ENCODE measurements at regions of chr11 and their contacts with region 1.

Region 1: DNA sequence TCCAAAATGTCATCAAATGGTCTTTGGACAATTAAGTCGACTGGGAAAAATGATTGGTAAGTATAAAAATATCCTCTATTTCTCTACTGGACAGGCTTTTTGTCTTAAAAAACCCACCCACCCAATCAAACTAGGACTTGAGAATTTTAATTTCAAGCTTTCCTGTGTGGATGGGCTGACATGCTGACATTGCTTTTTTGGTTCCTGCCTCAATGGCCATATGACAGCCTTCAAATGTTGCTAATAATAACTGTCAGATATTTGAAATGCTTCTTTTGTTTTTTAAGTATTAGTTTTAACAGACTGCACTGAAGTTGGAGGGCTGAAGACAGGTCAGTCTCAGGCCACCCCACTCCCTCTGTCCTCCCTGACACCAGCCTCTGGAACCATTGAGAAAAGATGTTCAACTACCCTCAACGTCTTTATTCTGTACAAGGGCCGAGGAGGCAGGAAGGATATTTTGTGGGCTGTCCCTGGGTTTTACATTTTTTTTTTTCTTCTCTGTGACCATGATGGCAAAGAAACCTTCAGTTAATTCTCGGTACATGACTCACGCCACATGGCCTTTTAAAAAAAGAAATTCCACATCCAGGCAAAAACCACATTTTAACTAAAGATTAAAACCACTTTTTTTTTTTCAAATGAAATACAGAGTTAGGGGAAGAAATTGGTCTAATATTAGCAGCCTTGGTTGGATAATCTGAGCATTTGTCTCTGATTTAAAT is 130.4 kb downstream of the SLC1A2 start:
- DNase-seq: no peak
- H3K4me3 ChIP-seq: no peak overlapping the region
- H3K27ac ChIP-seq: peak overlapping the region; percentile 40 to 68
- H3K4me1 ChIP-seq: peaks cover 0 to 11% of the 10 kb centered on the region in 2 donors
- H3K27me3 ChIP-seq: no peaks in the 10 kb centered on the region
- CTCF ChIP-seq: no peak

Region 2: DNA sequence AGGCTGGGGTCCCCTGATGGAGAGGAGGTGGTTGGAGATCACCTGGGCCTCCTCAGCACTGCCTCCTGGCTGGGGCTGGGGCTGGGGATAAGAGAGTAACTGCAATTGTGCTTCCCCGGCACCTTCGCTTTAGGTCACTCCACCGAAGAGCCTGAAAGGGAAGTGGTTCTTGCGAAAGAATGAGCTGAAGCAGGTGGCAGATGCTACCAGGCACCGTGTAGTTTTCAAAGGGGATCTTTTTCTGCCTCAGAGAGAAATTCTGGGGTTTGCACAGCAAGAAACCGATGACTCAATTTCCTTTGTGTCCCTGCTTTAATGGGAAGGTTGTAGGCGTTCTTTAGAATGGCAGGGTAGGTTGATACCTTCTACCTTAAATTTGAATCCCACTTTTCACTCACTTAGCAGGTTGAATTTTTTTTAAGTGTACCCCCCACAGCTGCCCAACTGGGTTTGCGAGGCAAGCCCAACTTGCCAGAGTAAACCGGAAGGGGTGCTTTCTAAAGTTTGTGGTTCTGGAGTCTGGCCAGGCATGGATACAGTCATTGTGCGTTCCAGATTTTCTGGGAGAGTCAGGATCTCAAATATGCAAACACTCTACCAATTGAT is 144.7 kb before region 1 on chr11:
- intact Hi-C with region 1: loop called (anchors 5 kb)
- DNase-seq: no peak
- H3K4me3 ChIP-seq: peak overlapping the region; percentile 3 to 31
- H3K27ac ChIP-seq: peak overlapping the region; percentile 54 to 98
- H3K4me1 ChIP-seq: peaks cover 19 to 50% of the 10 kb centered on the region in 2 donors
- H3K27me3 ChIP-seq: no peaks in the 10 kb centered on the region
- CTCF ChIP-seq: no peak

Region 3: GRCh38 chr11:35165423-35166368 is 123.3 kb before region 1 on chr11:
- intact Hi-C with region 1: loop called (anchors 5 kb)
- DNase-seq: peak in 1 of 2 donors; percentile 84
- H3K4me3 ChIP-seq: no peak overlapping the region
- H3K27ac ChIP-seq: peak overlapping the region; percentile 87 to 89
- H3K4me1 ChIP-seq: peaks cover 23 to 87% of the 10 kb centered on the region in 2 donors
- H3K27me3 ChIP-seq: no peaks in the 10 kb centered on the region
- CTCF ChIP-seq: no peak

Region 4: DNA sequence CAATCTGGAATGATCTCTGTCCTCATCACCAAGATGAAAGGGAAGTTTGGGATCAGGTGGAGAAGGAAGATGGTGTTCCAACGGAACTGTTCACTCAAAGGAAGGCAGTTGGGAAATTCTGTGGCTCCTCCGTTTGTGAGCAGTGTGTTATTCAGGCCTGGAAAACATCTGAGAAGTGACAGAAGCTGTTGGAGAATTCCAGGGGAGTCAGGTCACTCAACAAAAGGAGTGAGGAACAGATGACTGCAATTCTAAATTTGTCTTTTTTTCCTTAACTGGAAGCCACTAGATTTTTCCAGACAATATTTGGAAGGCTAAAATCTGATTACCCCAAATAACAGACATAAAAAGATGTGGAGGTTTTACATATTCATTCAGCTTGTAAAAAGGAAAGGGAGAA is 42.2 kb before region 1 on chr11:
- intact Hi-C with region 1: loop called (anchors 5 kb)
- DNase-seq: peak in 1 of 2 donors; percentile 88
- H3K4me3 ChIP-seq: no peak overlapping the region
- H3K27ac ChIP-seq: peak overlapping the region; percentile 91 to 95
- H3K4me1 ChIP-seq: peaks cover 9 to 22% of the 10 kb centered on the region in 2 donors
- H3K27me3 ChIP-seq: no peaks in the 10 kb centered on the region
- CTCF ChIP-seq: no peak

Region 5: DNA sequence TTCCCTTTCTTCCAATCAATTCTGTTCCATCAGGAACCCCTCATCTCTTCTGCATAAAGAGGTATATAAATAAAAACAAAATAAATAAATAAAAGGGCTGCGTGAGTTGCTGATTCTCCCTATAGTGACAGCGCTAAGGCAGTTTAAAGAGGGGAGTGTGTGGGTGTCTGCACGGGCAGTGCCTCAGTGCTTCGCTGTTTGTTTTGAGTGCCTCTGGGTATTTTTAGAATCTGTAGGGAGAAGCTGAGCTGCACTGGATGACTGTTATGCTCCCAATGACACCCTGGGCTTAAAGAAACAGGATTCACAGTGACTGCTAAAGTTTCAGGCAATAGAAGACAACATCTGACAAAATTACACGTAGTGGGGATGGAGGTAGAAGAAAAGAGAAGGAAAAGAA is 91.6 kb after region 1 on chr11:
- intact Hi-C with region 1: loop called (anchors 5 kb)
- DNase-seq: no peak
- H3K4me3 ChIP-seq: peak overlapping the region in 1 of 2 donors; percentile 45
- H3K27ac ChIP-seq: no peak overlapping the region
- H3K4me1 ChIP-seq: no peaks in the 10 kb centered on the region
- H3K27me3 ChIP-seq: no peaks in the 10 kb centered on the region
- CTCF ChIP-seq: no peak